Left cardiac atrium (tissue), 4 donors: ENCODE measurements at regions of chr17 and their contacts with region 1.

Region 1: GRCh38 chr17:67491009-67491680 is 114.1 kb downstream of the PITPNC1 start:
- DNase-seq: peak; percentile 94
- ATAC-seq: peak; percentile 97 to 98

Region 2: GRCh38 chr17:67528751-67529436 is 37.7 kb after region 1 on chr17:
- intact Hi-C with region 1: loop called in 1 of 2 experiments (anchors 5 kb)
- DNase-seq: peak; percentile 87
- ATAC-seq: peak; percentile 89 to 97

Region 3: DNA sequence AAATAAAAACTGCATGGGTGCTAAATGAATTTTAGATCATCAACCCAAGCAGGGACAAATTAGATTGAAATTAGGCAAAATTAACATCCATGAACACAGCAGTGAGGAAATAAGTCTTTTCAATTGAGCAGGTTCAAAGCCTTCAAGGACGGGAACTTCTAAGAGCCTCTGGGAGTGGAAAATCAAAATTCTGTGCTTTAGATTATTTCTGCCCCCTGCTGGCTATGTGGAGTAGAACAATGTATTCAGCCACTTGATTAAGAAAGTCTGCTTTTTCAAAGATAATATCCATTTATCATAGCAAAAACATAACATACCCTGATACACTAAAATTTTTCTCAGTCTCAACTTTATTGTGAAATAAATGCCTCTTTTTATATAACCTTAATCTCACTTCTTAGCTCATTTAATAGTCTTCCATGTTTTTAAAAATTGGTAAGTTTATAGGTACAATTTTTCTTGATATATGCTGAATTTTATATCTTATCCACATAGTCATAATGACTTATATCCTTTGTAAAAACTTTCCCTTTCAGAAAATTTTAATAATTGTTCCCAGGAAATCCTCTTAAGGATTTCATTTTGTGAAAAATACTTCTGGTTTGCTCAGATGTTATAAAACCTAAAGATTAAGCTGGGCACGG is 198.5 kb after region 1 on chr17:
- intact Hi-C with region 1: loop called in 1 of 2 experiments (anchors 10 kb)
- DNase-seq: peak; percentile 34
- ATAC-seq: peak; percentile 44 to 49

Region 4: DNA sequence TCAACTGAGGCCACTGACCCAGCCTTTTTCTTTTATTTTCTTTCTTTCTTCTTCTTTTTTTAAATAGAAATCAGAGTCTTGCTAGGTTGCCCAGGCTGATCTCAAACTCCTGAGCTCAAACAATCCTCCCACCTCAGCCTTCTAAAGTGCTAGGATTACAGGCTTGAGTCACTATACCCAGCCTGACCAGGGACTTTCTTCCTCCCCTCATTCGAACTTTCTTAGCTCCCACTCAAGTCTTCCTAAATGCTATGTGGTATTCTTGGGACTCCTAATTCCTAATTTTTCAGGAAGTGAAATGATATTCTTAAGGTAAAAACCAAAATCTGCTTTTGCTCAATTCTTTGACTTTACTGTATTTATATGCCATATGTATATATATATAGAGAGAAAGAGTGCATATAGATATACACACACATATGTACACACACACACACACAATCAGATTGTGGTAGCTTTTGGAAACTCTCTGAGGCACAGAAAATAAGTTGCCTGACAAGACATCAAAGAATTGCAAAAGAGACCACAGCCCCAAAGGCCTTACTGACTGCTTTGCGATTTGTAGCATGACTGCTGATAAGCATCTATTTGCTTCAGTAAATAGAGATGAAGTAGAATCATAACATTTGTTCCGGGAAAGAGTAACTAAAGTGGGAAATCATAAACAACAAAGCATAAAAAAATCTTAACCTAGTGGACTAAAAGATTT is 747.2 kb after region 1 on chr17:
- intact Hi-C with region 1: no loop called
- DNase-seq: no peak
- ATAC-seq: no peak